Endothelial cell of umbilical vein (primary cell): ENCODE measurements at regions of chr2 and their contacts with region 1.

Region 1: GRCh38 chr2:66429071-66429477 is 5.9 kb upstream of the MEIS1 start:
- DNase-seq: peak; percentile 74
- H3K4me3 ChIP-seq: no peak overlapping the region
- H3K27ac ChIP-seq: no peak overlapping the region
- H3K4me1 ChIP-seq: peaks cover 9% of the 10 kb centered on the region
- H3K27me3 ChIP-seq: peaks cover 46 to 50% of the 10 kb centered on the region in 2 experiments
- CTCF ChIP-seq: peak; percentile 78
- POLR2A ChIP-seq: no peak

Region 2: DNA sequence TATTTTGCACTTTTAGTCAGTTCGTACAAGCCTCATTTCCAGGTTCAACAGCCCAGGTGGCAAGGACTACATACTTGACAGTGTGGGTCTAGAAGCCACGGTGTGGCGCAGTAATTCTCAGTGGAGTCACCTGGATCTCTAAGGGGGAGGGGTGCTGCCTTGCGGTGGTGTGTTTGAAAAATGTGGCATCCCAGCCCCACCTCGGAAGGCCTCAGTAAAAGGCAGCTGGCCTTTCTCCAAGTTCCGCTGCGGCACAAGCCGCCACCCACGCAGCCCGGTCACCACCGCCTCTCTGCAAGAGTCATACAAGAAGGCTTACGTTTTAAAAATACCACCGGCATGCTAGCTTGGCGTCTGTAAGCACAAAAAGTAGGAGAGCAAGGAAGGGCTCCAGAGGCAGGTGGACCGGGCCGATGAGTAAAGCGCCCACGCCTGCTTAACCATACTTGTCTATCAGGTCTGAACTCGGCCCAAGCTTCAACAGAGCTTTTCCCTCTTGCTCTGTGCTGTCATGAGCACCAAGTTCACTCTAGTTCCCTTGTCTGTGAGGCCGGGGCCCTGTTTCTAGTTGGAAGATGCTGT is 1046.2 kb before region 1 on chr2:
- CTCF ChIA-PET with region 1: no interaction called
- POLR2A ChIA-PET with region 1: no interaction called
- dilution Hi-C with region 1: no loop called
- intact Hi-C with region 1: no loop called
- DNase-seq: no peak
- H3K4me3 ChIP-seq: no peak overlapping the region
- H3K27ac ChIP-seq: no peak overlapping the region
- H3K4me1 ChIP-seq: peaks cover 21% of the 10 kb centered on the region
- H3K27me3 ChIP-seq: peaks cover 59 to 60% of the 10 kb centered on the region in 2 experiments
- CTCF ChIP-seq: no peak
- POLR2A ChIP-seq: no peak

Region 3: GRCh38 chr2:65640793-65641103 is 788.3 kb before region 1 on chr2:
- CTCF ChIA-PET with region 1: interaction called, 5 read pairs
- POLR2A ChIA-PET with region 1: no interaction called
- dilution Hi-C with region 1: no loop called
- intact Hi-C with region 1: loop called (anchors 2 kb)
- DNase-seq: no peak
- H3K4me3 ChIP-seq: no peak overlapping the region
- H3K27ac ChIP-seq: no peak overlapping the region
- H3K4me1 ChIP-seq: no peaks in the 10 kb centered on the region
- H3K27me3 ChIP-seq: peaks cover 12 to 15% of the 10 kb centered on the region in 2 experiments
- CTCF ChIP-seq: no peak
- POLR2A ChIP-seq: no peak

Region 4: DNA sequence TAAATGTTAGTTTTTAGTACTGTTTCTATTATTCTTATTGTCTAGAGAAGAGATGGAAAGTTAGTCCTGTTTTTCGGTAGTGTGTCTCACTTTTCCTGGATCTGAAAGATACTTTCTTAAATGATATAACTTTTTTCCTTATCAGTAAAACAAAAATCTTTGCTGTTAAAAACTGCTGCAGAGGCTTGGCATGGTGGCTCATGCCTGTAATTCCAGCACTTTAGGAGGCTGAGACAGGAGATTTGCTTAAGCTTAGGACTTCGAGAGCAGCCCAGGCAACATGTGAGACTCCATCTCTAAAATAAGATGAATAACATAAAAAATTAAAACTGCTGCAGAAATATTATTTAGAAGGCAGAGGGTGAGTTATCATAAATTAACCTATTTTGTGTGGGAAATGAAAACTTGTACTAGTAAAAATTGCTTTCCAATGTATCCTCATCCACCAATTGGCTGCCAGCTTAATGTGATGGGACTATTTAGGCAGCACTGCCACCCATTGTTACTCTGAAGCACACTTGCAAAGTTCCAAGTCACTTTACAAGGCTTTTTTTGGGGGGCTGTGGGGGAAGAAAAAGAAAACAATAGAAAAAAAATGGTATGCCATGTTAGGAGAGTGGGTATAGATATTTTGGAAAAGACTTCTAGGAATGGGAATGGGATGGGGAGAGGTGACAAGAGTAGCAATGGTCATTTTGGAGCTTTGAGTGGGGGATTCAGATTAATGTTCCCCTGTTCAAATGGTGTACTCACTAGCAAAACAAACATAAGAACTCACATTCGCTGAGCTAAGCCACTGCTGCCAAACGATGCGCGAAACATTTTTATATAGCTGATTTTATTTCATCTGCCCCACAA is 68.6 kb after region 1 on chr2:
- CTCF ChIA-PET with region 1: interaction called, 11 read pairs
- POLR2A ChIA-PET with region 1: no interaction called
- dilution Hi-C with region 1: no loop called
- intact Hi-C with region 1: no loop called
- DNase-seq: no peak
- H3K4me3 ChIP-seq: no peak overlapping the region
- H3K27ac ChIP-seq: no peak overlapping the region
- H3K4me1 ChIP-seq: peaks cover 3% of the 10 kb centered on the region
- H3K27me3 ChIP-seq: no peaks in the 10 kb centered on the region
- CTCF ChIP-seq: no peak
- POLR2A ChIP-seq: no peak

Region 5: GRCh38 chr2:66587216-66587615 is 158.1 kb after region 1 on chr2:
- CTCF ChIA-PET with region 1: interaction called, 10 read pairs
- POLR2A ChIA-PET with region 1: interaction called, 3 read pairs
- dilution Hi-C with region 1: no loop called
- intact Hi-C with region 1: no loop called
- DNase-seq: no peak
- H3K4me3 ChIP-seq: no peak overlapping the region
- H3K27ac ChIP-seq: no peak overlapping the region
- H3K4me1 ChIP-seq: no peaks in the 10 kb centered on the region
- H3K27me3 ChIP-seq: peaks cover 23 to 51% of the 10 kb centered on the region in 2 experiments
- CTCF ChIP-seq: no peak
- POLR2A ChIP-seq: no peak

Region 6: GRCh38 chr2:67215214-67216055 is 786.4 kb after region 1 on chr2:
- CTCF ChIA-PET with region 1: interaction called, 30 read pairs
- POLR2A ChIA-PET with region 1: no interaction called
- dilution Hi-C with region 1: no loop called
- intact Hi-C with region 1: loop called (anchors 1 kb)
- DNase-seq: peak; percentile 77
- H3K4me3 ChIP-seq: no peak overlapping the region
- H3K27ac ChIP-seq: no peak overlapping the region
- H3K4me1 ChIP-seq: no peaks in the 10 kb centered on the region
- H3K27me3 ChIP-seq: no peaks in the 10 kb centered on the region
- CTCF ChIP-seq: peak; percentile 74 to 85
- POLR2A ChIP-seq: no peak

Region 7: DNA sequence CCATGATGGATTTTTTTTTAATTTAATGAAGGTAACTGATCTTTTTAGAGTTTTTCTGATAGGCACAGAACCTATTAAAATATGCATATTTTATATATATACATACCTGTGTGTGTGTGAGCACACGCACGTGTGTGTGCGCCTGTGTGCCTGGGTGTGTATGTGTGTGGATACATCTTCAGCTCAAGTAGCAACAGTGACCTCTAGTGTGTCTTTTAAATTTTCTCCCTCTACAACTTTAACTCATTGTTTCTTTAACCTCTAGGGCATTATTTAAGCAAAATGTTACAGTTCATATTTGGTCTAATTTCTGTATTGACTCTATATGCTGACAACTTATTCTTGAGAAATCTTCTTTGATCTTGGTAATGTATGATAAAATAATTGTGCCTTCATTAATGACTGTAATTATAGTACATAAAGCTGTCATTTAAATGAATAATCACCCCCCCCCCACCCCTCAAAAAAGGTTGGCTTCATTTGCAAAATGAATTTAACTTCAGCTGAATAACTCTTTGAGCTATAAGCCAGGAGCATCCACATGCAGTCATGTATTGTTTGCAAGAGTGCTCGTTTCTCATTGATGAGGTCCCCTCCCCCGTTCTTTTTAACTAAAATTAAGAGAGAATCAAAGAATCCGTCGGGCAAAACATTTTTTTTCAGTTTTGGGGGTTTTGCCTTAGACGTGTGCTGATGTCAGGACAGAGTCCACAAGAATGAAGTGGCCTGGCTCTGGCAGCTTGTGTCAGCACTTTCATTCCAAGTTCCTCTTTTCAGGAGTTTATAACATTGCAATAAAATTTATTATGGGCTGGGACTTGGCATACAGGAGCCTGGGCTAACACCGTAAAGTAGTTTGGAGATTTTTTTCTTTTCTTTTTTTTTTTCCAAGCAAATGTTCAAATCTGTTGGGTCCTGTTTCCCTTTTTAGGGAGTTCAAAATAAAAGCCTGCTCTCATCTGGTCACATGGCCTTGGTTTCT is 1048.0 kb after region 1 on chr2:
- CTCF ChIA-PET with region 1: interaction called, 7 read pairs
- POLR2A ChIA-PET with region 1: no interaction called
- dilution Hi-C with region 1: no loop called
- intact Hi-C with region 1: loop called (anchors 1 kb)
- DNase-seq: peak; percentile 68
- H3K4me3 ChIP-seq: no peak overlapping the region
- H3K27ac ChIP-seq: no peak overlapping the region
- H3K4me1 ChIP-seq: no peaks in the 10 kb centered on the region
- H3K27me3 ChIP-seq: no peaks in the 10 kb centered on the region
- CTCF ChIP-seq: peak; percentile 39 to 40
- POLR2A ChIP-seq: no peak